HEK293 (cell line): ENCODE measurements at regions of chr17 and their contacts with region 1.

Region 1: DNA sequence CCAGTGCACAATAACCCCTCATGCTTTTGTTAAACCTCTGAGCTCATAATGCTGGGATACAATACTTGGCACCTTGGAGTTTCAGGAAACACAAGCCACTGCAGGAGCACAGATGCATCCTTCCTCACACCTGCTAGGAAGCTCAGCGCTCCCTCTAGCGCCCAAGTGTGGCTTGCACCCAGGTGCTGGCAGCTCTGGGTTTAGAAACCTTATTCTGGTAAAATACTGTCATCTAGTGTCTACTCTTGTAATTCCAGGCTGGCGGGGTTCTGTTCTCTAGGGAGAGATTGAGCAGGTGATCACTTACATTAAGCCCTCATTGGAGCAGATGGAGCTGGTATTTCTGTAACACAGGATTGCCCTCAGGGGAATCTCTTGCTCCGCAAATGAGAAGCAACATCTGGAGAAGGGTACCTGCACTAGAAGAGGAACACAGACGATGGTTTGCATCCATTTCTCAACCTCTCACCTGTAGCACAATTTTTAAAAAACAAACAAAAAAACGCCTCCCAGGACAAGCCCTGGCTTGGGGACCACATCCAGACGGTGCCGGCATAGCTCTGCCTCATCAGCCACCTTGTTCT is 1.5 kb downstream of the CCL1 start:
- H3K4me3 ChIP-seq: no peak overlapping the region
- H3K27ac ChIP-seq: no peak overlapping the region
- H3K4me1 ChIP-seq: no peaks in the 10 kb centered on the region
- CTCF ChIP-seq: peak; percentile 97

Region 2: DNA sequence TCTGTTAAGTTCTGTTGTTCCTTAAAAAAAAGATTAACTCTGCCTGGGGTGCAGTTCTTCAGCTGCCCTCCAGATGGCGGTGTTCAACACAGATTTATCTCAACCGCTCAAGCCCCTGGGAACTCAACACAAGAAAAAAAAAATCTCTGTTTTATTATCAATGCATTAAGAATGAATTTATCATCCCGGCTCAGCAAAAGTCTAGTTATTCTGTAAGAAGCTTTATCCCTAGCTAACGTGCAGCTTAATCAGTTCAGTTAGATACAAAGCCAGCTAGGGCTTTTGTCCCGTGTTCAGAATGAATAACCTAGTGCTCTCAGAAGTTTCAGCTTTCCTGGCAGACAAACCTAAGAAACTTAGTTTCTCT is 582.4 kb before region 1 on chr17:
- CTCF ChIA-PET with region 1: interaction called, 16 read pairs
- POLR2A ChIA-PET with region 1: no interaction called
- H3K4me3 ChIP-seq: no peak overlapping the region
- H3K27ac ChIP-seq: no peak overlapping the region
- H3K4me1 ChIP-seq: no peaks in the 10 kb centered on the region
- CTCF ChIP-seq: 0 out of 2 replicates have a peak, but pooled peaks have one; percentile 23

Region 3: GRCh38 chr17:34125921-34126320 is 235.6 kb before region 1 on chr17:
- CTCF ChIA-PET with region 1: no interaction called
- POLR2A ChIA-PET with region 1: no interaction called
- H3K4me3 ChIP-seq: no peak overlapping the region
- H3K27ac ChIP-seq: no peak overlapping the region
- H3K4me1 ChIP-seq: no peaks in the 10 kb centered on the region
- CTCF ChIP-seq: no peak

Region 4: DNA sequence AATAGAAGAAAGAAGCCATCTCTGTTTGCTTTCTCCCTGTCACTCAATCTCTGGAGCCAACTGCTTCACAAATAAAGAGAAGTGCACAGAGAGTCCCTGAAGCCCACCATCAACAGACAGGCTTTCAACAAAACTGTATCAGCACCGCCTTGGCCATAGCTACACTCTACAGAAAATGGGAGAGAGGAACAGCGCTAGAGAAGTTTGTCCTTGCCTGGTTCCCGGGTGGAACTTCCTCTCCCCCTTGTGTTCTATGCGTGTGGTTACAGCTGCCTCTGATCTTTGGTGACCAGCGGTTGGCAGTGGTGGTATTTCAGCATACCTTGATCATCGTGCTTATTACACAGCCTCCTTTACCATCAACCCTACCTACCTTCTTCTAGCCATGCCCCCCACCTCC is 197.9 kb before region 1 on chr17:
- CTCF ChIA-PET with region 1: interaction called, 176 read pairs
- POLR2A ChIA-PET with region 1: no interaction called
- H3K4me3 ChIP-seq: no peak overlapping the region
- H3K27ac ChIP-seq: no peak overlapping the region
- H3K4me1 ChIP-seq: peaks cover 10% of the 10 kb centered on the region; the same call in 1 of the 2 replicates
- CTCF ChIP-seq: peak; percentile 77; the same call in 1 of the 2 replicates

Region 5: DNA sequence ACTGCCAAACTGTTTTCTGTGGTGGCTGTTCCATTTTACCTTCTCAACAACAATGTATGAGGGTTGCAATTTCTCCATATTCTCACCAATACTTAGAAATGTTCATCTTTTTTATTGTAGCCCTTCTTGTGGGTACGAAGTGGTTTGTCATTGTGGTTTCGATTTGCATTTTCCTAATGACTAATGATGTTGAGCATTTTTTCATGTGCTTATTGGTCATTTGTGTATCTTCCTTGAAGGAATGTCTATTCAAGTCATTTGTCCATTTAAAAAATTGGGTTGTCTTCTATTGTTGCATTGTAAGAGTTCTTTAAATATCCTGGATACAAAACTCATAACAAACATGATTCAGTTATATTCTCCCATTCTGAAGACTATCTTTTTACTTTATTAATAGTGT is 154.0 kb before region 1 on chr17:
- CTCF ChIA-PET with region 1: interaction called, 578 read pairs
- POLR2A ChIA-PET with region 1: interaction called, 3 read pairs
- H3K4me3 ChIP-seq: no peak overlapping the region
- H3K27ac ChIP-seq: no peak overlapping the region
- H3K4me1 ChIP-seq: no peaks in the 10 kb centered on the region
- CTCF ChIP-seq: no peak

Region 6: GRCh38 chr17:34275881-34276280 is 85.7 kb before region 1 on chr17:
- CTCF ChIA-PET with region 1: interaction called, 22 read pairs
- POLR2A ChIA-PET with region 1: no interaction called
- H3K4me3 ChIP-seq: no peak overlapping the region
- H3K27ac ChIP-seq: no peak overlapping the region
- H3K4me1 ChIP-seq: peaks cover 7% of the 10 kb centered on the region; the same call in 1 of the 2 replicates
- CTCF ChIP-seq: no peak

Region 7: GRCh38 chr17:34337701-34338100 is 23.9 kb before region 1 on chr17:
- CTCF ChIA-PET with region 1: interaction called, 34 read pairs
- POLR2A ChIA-PET with region 1: no interaction called
- H3K4me3 ChIP-seq: no peak overlapping the region
- H3K27ac ChIP-seq: no peak overlapping the region
- H3K4me1 ChIP-seq: no peaks in the 10 kb centered on the region
- CTCF ChIP-seq: no peak

Region 8: GRCh38 chr17:34393401-34393800 is 31.8 kb after region 1 on chr17:
- CTCF ChIA-PET with region 1: interaction called, 35 read pairs
- POLR2A ChIA-PET with region 1: no interaction called
- H3K4me3 ChIP-seq: no peak overlapping the region
- H3K27ac ChIP-seq: no peak overlapping the region
- H3K4me1 ChIP-seq: 0 out of 2 replicates have a peak, but pooled peaks cover 2% of the 10 kb centered on the region
- CTCF ChIP-seq: no peak